Posterior vena cava (tissue), 2 donors: ENCODE measurements at regions of chr6 and their contacts with region 1.

Region 1: DNA sequence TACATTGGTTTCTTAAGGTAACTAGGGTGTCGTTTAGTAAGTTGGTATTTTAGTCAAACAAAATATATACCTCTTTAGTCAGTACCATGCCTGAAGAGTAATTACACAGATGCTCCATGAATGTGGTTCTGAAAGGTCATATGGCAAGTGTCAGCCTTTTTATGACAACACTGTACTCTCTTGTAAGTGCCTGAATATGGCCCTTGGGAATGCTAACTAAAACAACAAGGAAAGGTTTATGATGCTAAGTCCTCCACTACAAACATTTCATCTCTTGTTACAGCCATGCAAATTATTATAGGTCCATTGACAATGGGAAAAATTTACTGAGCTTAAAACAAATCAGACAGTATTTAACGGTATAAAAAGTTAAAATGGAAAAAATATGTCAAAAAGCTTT is 39.0 kb upstream of the SUPT3H start:
- DNase-seq: no peak

Region 2: GRCh38 chr6:45377554-45378333 is 39.0 kb before region 1 on chr6 and contains the start of gene SUPT3H:
- intact Hi-C with region 1: loop called in 1 of 2 experiments (anchors 2 kb)
- DNase-seq: peak; percentile 97
- total RNA-seq, gene SUPT3H: 7.9 to 10.3 TPM